ENCODE measurements at regions of chr1 and their contacts with region 1.

Region 1: DNA sequence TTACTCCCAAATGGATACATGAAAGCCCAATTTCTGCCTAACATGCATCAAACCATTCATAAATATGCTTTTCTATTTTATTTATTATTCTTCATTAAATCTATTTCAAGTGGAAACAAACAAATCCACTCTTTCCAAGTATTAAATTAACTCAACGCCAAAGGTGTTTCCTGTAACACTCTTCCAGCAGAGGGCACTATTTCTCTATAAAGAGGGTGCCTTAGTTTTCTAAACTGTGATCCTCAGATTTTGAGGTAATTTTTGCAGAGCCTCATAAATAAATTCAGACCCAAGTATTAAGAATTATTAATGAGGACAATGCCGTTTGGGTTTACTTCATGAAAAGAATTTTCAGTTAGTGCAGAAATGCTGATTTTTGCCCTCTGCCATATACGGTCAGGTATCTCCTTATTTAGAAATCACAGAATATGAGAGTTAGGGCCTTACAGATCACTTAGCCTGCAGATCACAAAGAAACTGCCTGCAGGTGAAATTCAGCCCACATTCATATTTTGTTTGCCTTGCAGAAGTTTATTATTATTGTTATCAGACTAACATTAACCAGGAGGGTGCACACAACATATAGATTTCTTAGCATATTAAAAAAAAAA is 40.1 kb upstream of the MYSM1 start:
- DNase-seq: no peak
- ATAC-seq: peak; percentile 54
- H3K4me3 Mint-ChIP-seq: no peak overlapping the region
- H3K27ac Mint-ChIP-seq: no peak overlapping the region
- H3K4me1 Mint-ChIP-seq: no peaks in the 10 kb centered on the region
- H3K27me3 Mint-ChIP-seq: no peaks in the 10 kb centered on the region
- CTCF ChIP-seq: peak; percentile 87

Region 2: GRCh38 chr1:58773406-58773840 is 33.5 kb after region 1 on chr1:
- CTCF ChIA-PET with region 1: interaction called, 4 read pairs
- POLR2A ChIA-PET with region 1: interaction called, 3 read pairs
- intact Hi-C with region 1: loop called (anchors 2 kb)
- DNase-seq: peak; percentile 24
- ATAC-seq: peak; percentile 89
- H3K4me3 Mint-ChIP-seq: no peak overlapping the region
- H3K27ac Mint-ChIP-seq: peak overlapping the region; percentile 73
- H3K4me1 Mint-ChIP-seq: peaks cover 19% of the 10 kb centered on the region
- H3K27me3 Mint-ChIP-seq: peaks cover 6% of the 10 kb centered on the region
- CTCF ChIP-seq: no peak

Region 3: DNA sequence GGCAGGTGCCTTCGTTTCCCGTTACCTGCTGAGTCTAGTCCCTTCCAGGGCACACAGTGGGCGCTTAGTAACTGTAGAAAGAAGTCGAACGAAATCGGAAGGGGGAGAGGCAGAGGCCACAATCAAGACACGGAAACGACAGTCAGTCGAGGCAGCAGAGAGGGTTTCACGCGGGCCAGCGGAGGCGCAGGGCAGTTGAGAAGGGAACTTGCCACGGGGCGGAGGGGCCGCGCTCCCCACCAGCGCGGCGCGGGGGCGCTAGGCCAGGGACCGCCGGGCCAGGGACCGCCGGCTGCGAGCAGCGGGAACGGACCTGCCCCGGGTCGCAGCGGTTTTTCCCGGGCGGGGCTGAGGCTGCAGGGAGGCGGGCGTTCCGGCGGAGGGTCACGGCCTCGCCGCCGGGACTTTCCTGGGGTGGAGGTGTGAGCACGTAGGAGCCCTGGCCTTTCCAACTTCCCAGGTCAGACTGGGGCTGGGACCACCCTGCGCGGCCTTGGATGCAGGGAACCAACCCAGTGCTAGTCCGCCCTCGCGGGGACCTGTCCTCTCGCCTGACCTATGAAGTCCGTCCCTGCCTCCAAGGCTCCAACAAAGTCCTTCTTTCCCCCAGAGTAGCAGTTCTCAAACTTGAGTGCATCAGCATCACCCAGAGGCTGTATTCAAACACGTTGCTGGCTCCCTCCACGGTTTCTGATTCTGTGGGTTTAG is 406.8 kb after region 1 on chr1:
- CTCF ChIA-PET with region 1: no interaction called
- POLR2A ChIA-PET with region 1: no interaction called
- intact Hi-C with region 1: loop called (anchors 5 kb)
- DNase-seq: peak; percentile 64
- ATAC-seq: peak; percentile 84
- H3K4me3 Mint-ChIP-seq: peak overlapping the region; percentile 85
- H3K27ac Mint-ChIP-seq: peak overlapping the region; percentile 82
- H3K4me1 Mint-ChIP-seq: peaks cover 46% of the 10 kb centered on the region
- H3K27me3 Mint-ChIP-seq: no peaks in the 10 kb centered on the region
- CTCF ChIP-seq: no peak

Region 4: GRCh38 chr1:59290193-59290947 is 550.4 kb after region 1 on chr1:
- CTCF ChIA-PET with region 1: interaction called, 3 read pairs
- POLR2A ChIA-PET with region 1: no interaction called
- intact Hi-C with region 1: loop called (anchors 1 kb)
- DNase-seq: no peak
- ATAC-seq: peak; percentile 67
- H3K4me3 Mint-ChIP-seq: no peak overlapping the region
- H3K27ac Mint-ChIP-seq: peak overlapping the region; percentile 15
- H3K4me1 Mint-ChIP-seq: peaks cover 37% of the 10 kb centered on the region
- H3K27me3 Mint-ChIP-seq: no peaks in the 10 kb centered on the region
- CTCF ChIP-seq: no peak

Region 5: DNA sequence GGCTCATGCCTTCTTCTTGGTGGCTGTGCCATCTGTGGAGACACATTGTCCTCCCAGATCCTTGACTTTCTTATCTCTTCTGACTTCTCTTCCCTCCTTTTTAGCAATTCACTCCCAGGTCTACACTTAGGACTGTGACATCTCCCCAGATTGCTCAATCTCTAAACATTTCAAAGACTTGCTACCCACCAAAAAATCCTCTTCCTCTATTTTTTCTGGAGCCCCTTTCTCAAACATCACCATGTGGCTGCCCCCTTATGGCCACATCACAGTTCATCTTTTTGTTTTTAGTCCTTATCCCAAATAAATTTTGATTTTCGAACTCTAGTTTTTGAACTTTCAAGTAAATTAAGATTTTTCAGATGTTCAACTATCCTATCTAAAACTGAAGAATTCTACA is 926.1 kb after region 1 on chr1:
- CTCF ChIA-PET with region 1: no interaction called
- POLR2A ChIA-PET with region 1: no interaction called
- intact Hi-C with region 1: loop called (anchors 1 kb)
- DNase-seq: no peak
- ATAC-seq: no peak
- H3K4me3 Mint-ChIP-seq: no peak overlapping the region
- H3K27ac Mint-ChIP-seq: no peak overlapping the region
- H3K4me1 Mint-ChIP-seq: no peaks in the 10 kb centered on the region
- H3K27me3 Mint-ChIP-seq: no peaks in the 10 kb centered on the region
- CTCF ChIP-seq: no peak

Region 6: DNA sequence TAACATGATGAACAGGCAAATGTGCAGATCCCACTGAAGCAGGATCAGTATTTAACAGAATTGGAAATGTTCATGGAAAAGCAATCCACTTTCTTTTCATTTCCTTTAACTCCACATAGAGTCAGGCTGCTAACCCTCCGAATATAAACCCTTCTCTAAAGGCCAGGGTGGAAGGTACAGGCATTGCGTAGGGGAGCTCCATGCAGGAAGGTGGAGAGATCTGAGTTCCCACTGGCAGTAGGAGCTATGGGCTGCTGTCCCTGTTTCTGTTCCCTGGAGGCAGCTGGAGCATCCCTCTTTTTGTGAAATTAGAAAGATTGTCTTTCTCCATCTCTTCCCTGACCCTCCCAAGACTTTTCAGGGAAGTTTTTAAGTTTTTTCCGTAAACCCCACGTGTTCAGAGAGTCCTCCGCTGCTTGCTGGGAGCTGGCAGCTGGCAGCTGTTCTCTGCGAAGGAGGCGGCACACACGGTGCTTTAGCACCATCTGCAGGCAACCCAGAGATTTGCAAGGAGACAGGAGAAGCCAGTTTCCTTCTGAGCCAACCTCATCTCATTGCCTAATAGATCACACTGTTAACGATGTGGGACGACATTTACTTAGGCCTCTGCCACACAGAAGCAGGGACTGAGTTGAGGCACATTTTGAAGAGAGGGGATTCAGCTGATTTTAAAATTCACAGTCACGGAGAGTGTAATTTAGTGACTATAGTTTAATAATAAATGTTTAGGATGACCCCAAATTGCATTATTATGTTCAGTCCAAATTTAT is 1019.4 kb after region 1 on chr1:
- CTCF ChIA-PET with region 1: interaction called, 25 read pairs
- POLR2A ChIA-PET with region 1: interaction called, 3 read pairs
- intact Hi-C with region 1: loop called (anchors 1 kb)
- DNase-seq: peak; percentile 50
- ATAC-seq: peak; percentile 93
- H3K4me3 Mint-ChIP-seq: peak overlapping the region; percentile 35
- H3K27ac Mint-ChIP-seq: no peak overlapping the region
- H3K4me1 Mint-ChIP-seq: peaks cover 4% of the 10 kb centered on the region
- H3K27me3 Mint-ChIP-seq: no peaks in the 10 kb centered on the region
- CTCF ChIP-seq: peak; percentile 96

Region 7: DNA sequence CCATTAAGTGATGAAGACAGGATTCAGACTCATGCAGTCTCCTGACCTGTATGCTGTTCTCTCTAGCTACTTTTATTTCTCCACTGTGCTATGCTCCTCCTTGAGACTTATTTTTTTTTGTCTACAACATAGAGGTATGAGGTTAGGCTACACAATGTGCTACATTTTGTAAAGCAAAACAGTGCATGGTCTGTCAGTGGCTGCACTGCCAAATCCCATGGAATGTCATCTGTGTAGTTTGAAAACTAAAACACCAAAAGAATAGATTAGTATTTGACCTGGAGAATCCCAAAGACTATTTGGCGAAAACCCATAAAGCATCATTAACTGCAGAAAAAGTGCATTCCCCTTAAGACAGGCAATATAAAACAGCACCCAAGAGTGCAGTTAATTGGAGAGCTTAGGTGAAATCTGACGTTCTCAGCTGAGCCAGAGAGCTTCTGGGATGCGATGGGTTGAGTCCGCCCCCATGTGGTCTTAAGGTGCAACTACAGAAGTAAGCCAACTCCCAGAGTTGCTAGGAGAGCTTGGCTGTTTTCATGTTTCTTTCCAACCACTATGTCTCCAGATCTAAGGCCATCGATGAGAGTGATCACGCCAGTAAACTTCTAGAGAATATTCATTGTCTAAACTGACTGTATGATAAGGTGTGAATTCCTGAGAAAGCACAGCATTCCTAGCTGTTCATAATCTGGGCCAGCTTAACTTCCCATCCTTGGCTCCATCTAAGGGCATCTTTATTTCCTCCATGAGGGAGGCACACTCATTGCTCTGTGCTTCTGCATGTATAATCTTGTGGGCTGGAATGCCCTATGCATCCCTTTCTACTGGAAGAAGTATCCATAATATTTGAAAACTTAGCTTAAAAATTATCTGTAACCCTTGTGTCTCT is 1207.3 kb after region 1 on chr1:
- CTCF ChIA-PET with region 1: interaction called, 10 read pairs
- POLR2A ChIA-PET with region 1: no interaction called
- intact Hi-C with region 1: loop called (anchors 2 kb)
- DNase-seq: no peak
- ATAC-seq: peak; percentile 73
- H3K4me3 Mint-ChIP-seq: no peak overlapping the region
- H3K27ac Mint-ChIP-seq: no peak overlapping the region
- H3K4me1 Mint-ChIP-seq: no peaks in the 10 kb centered on the region
- H3K27me3 Mint-ChIP-seq: peaks cover 10% of the 10 kb centered on the region
- CTCF ChIP-seq: peak; percentile 64